Activated CD4-positive, alpha-beta T cell treated with anti-CD3 and anti-CD28 coated beads for 36 hours (primary cell): ENCODE measurements at regions of chr9 and their contacts with region 1.

Region 1: DNA sequence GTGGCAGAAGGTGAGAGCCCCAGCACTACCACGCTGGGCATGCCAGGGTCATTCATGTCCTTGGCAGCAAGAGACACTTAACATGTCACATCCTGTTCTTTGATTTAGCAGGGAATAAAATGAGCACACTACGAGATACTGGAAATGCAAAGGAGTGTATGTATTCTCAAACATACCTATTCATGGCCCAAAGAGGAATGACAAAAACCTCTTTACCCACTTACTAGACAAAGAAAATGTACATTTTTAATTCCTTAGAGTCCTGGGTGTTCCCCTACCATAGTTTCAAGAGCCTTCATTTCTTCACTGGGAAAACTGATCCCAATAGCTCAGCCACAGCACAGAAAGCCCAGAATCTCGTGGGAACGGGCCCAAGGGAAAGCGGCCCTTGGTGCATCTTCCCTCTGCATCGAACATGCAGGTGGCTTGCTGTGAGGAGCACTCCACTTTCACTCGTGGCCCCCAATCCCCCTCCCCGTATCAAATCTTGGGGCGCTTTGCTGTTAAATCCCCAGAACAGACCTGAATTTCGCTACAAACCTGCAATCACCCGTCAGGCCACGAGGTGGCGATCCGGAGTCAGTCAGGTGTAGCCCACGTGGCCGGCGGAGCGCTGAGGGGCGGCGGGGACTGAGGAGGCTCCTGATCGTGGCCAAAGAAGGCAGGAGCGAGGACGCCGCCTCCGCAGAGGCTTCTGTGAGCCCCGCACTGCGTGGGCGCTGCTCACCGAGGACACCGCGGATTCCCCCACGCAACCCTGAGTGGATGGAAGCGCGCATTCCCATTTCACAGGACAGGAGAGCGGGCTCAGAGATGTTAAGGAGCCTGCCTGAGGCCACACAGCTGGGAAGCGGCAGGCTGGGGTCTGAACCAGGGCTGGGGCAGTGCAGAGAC is 91.4 kb downstream of the LMX1B start:
- DNase-seq: peak; percentile 92
- ATAC-seq: peak; percentile 75
- H3K4me3 Mint-ChIP-seq: peak overlapping the region; percentile 29
- H3K27ac Mint-ChIP-seq: no peak overlapping the region
- H3K4me1 Mint-ChIP-seq: peaks cover 19% of the 10 kb centered on the region
- H3K27me3 Mint-ChIP-seq: peaks cover 24% of the 10 kb centered on the region

Region 2: GRCh38 chr9:126228781-126229444 is 476.2 kb before region 1 on chr9:
- CTCF ChIA-PET with region 1: no interaction called
- POLR2A ChIA-PET with region 1: no interaction called
- intact Hi-C with region 1: no loop called
- DNase-seq: peak; percentile 84
- ATAC-seq: peak; percentile 99
- H3K4me3 Mint-ChIP-seq: no peak overlapping the region
- H3K27ac Mint-ChIP-seq: no peak overlapping the region
- H3K4me1 Mint-ChIP-seq: no peaks in the 10 kb centered on the region
- H3K27me3 Mint-ChIP-seq: peaks cover 29% of the 10 kb centered on the region

Region 3: DNA sequence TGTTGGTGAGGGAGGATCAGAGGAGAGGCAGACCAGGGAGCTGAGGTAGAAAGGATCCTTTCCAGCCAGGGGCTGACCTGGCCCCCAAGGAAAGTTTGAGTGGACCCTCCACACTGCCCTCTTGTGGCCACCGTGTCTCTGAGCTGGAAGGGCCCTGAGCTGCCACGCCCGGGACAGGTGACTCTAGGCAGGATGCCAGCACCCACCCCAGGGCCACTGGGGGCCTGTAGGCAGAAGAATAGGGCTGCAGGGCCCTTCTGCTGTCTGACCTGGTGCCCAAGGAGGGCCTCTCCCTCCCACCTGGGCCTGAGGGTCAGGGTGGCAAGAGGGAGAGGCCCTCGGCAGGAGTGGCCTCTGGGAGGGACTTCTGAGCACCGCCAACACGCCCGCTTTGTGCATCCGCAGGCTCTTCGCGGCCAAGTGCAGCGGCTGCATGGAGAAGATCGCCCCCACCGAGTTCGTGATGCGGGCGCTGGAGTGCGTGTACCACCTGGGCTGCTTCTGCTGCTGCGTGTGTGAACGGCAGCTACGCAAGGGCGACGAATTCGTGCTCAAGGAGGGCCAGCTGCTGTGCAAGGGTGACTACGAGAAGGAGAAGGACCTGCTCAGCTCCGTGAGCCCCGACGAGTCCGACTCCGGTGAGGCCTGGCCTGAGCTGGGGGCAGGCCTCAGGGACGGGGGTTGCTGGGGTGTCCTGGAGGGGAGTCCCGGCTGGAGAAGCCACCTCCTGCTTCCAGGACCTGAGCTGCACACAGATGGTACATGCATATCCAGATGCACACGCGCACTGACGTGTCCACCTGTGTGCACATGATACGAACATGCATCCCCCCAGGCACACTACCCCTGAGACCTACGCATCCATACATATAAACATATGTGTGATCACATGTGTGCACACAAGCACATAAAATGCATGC is 14.4 kb before region 1 on chr9:
- CTCF ChIA-PET with region 1: interaction called, 25 read pairs
- POLR2A ChIA-PET with region 1: interaction called, 5 read pairs
- intact Hi-C with region 1: no loop called
- DNase-seq: peak; percentile 79
- ATAC-seq: peak; percentile 79
- H3K4me3 Mint-ChIP-seq: no peak overlapping the region
- H3K27ac Mint-ChIP-seq: no peak overlapping the region
- H3K4me1 Mint-ChIP-seq: no peaks in the 10 kb centered on the region
- H3K27me3 Mint-ChIP-seq: peaks cover 28% of the 10 kb centered on the region

Region 4: DNA sequence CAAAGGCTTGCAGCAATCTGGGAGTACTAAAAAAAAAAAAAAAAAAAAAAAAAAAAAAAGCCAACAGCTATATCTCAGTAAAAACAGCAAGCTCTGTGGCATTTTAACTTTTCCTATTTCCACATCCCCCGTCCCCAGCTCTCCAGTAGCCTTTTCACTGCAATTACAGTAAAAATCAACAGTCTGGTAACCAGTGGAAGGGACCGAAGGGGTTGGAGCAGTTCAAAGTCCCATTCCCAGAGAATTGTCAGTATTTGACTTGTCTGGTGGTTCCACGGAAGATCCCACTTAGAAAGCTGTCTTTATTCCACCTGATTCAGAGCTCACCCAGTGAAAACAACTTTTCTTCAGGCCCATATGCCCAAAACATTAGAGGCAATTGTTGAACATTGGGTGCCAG is 27.9 kb after region 1 on chr9:
- CTCF ChIA-PET with region 1: interaction called, 35 read pairs
- POLR2A ChIA-PET with region 1: no interaction called
- intact Hi-C with region 1: no loop called
- DNase-seq: no peak
- ATAC-seq: no peak
- H3K4me3 Mint-ChIP-seq: no peak overlapping the region
- H3K27ac Mint-ChIP-seq: no peak overlapping the region
- H3K4me1 Mint-ChIP-seq: no peaks in the 10 kb centered on the region
- H3K27me3 Mint-ChIP-seq: no peaks in the 10 kb centered on the region

Region 5: GRCh38 chr9:126752376-126752775 is 47.3 kb after region 1 on chr9:
- CTCF ChIA-PET with region 1: interaction called, 18 read pairs
- POLR2A ChIA-PET with region 1: no interaction called
- intact Hi-C with region 1: no loop called
- DNase-seq: no peak
- ATAC-seq: no peak
- H3K4me3 Mint-ChIP-seq: no peak overlapping the region
- H3K27ac Mint-ChIP-seq: no peak overlapping the region
- H3K4me1 Mint-ChIP-seq: peaks cover 14% of the 10 kb centered on the region
- H3K27me3 Mint-ChIP-seq: no peaks in the 10 kb centered on the region

Region 6: DNA sequence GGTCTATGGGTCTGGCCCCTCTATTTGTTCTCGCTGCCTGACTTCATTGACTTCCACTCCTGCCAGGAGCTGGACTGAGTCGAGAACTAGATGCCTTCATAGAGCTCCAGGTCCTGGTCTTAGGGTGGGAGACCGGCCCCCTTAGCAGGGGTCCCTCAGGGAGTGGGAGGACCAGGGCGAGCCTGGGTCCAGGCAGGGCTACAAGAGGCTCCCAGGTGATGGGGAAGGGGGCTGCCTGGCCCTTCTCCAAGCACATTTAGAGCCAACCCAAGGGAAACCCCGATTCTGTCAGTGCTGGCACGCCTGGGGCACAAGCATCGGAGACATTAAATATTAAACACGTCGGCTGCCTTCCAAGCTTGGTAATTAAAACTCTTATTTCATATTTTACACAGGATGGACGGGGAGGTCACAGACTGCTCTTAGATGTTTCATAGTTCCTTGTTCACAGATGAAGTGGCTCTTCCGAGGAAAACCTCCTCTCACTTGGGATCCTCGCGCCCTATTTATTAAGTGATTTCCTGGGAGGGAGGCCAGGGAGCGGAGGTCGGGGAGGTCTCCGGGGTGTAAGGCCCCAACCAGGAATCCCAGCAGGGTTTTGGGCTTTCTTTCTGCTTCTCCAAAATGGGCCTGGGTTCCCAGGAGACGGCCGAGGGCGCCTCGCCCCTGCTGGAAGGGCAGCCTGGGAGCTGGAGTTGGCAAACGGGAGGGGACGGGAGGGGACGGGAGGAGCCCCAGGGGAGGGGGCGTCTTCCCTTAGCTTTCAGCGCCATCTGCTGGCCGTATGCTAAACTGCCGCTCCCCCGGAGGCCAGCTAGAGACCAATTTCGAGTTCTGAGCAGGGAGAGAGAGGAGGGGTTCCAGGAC is 76.3 kb after region 1 on chr9:
- CTCF ChIA-PET with region 1: interaction called, 288 read pairs
- POLR2A ChIA-PET with region 1: interaction called, 3 read pairs
- intact Hi-C with region 1: loop called (anchors 1 kb)
- DNase-seq: peak; percentile 90
- ATAC-seq: peak; percentile 94
- H3K4me3 Mint-ChIP-seq: no peak overlapping the region
- H3K27ac Mint-ChIP-seq: no peak overlapping the region
- H3K4me1 Mint-ChIP-seq: no peaks in the 10 kb centered on the region
- H3K27me3 Mint-ChIP-seq: peaks cover 9% of the 10 kb centered on the region